BJ (cell line): ENCODE measurements at regions of chr17 and their contacts with region 1.

Region 1: DNA sequence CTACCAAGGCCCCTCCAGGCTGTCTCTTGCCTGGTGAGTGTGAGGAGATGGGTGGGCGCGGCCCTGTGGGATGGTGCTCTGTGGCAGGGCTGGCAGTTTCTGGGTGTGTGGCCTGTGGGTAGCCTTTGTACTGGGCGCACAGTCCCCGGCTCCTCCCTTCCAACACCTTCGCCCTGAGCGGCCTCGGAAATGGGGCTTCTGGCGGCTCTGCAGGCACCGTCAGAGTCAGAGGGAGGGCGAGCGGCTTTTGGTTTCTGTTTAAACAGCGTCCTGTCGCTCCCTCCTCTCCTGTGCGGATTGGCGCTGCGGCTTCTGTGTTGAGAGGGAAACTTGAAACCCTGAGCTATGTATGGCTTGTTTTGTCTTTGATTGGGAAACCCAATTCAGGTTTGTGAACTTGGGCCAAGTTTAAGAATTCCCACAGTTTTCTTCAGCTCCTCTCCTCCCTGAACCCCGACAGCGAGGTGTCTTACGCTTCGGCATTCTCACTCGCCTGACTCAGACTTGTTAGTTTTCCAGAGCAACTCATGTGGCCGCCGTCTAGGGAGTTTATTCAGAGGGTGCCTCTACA is 8.3 kb upstream of the ZNF750 start:
- DNase-seq: no peak
- H3K4me3 ChIP-seq: peak overlapping the region; percentile 6; the same call in 1 of the 2 replicates
- H3K27me3 ChIP-seq: no peaks in the 10 kb centered on the region
- CTCF ChIP-seq: no peak

Region 2: DNA sequence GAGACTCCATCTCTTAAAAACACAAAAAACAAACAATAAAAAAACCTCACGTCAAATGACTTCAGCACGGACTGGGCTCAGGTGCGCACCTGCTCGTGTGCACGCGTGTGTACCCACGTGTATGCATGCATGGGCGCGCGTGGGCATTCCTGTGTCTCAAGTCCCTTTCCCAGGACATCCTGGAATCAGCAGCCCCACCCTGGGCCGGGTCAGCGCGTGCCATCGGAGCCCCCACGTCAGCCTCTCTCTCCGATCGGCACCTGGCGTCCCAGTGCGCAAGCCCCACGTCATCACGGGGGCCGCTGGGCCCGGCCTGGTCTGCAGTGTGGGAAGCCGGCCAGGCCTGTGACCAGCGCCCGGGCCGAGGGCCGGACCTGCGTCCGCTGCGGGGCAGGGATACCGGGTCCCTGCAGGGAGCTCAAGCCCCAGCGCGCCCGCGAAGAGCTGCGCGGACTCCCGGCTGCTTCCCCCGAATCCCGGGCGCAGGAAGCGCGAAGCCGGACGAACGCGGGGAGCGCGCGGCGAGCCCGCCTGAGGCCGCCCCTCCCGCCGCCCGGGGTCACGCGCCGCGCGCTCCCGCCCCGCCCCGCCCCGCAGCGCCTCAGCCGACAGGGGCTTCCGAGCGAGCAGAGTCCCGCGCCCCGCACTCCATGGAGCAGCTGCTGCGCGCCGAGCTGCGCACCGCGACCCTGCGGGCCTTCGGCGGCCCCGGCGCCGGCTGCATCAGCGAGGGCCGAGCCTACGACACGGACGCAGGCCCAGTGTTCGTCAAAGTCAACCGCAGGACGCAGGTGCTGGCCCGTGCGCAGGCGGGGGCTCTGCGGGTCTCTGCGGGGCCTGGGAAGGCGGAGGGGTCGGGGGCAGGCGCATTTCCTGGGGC is 112.9 kb before region 1 on chr17 and contains the start of gene FN3K:
- CTCF ChIA-PET with region 1: no interaction called
- POLR2A ChIA-PET with region 1: no interaction called
- DNase-seq: no peak
- H3K4me3 ChIP-seq: peak within 1 kb of the TSS; percentile 61
- H3K27me3 ChIP-seq: no peaks in the 10 kb centered on the region
- CTCF ChIP-seq: no peak
- polyA plus RNA-seq, gene FN3K: 1.1 and 1.2 TPM in 2 replicates

Region 3: GRCh38 chr17:82793974-82794630 is 54.0 kb before region 1 on chr17:
- CTCF ChIA-PET with region 1: no interaction called
- POLR2A ChIA-PET with region 1: interaction called, 15 read pairs
- DNase-seq: no peak
- H3K4me3 ChIP-seq: no peak overlapping the region
- H3K27me3 ChIP-seq: no peaks in the 10 kb centered on the region
- CTCF ChIP-seq: no peak